Activated naive CD4-positive, alpha-beta T cell treated with anti-CD3 and anti-CD28 coated beads for 36 hours (primary cell): ENCODE measurements at regions of chr2 and their contacts with region 1.

Region 1: DNA sequence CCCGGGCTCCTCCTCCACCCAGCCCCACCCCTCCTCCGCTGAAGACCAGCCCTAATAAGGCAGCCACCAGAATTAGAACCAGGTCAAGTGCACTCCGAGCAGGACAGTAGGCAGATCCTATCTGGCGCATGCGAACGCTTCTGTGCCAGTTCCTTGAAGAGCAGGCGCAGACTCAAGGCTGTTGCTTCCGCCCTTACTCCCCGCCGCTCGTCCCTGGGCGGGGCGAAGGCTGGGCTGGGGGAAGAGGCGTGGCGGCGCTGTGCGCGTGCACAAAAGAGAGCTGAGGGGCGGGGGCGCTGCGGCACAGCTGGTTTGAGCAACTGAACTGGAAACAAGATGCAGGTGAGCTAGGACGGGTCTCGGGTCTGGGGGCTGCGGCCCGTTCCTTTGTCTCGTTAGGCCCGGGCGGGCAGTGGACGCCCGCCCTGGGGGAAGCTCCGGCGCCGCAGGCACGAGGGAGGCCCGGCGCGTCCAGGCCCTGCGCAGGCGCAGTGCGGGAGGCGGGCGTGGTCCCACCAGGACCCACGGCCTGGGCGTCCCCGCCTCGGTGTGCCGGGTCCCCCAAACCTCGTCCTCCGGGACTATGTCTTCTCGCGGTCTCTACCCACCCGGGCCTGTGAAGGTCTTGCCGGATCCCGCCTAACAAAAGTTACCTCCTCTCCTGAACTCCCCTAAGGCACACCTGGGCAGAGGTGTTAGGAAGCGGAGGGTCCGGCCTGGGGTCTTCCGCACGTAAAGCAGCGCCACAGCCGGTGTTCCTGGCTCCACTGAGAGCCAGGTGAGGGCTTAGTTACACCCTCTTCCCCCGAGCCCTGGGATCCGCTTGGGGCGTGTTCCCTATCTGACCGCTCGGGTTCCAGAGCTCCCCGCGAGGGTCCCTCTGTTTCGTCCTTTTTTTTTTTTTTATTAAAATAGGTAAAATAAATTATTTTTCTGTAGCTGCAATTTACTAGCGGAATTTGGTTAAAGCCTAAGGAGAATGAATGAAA is at the start of gene PDCL3:
- DNase-seq: peak; percentile 94
- H3K4me3 Mint-ChIP-seq: peak within 1 kb of the TSS; percentile 93
- H3K27ac Mint-ChIP-seq: peak within 1 kb of the TSS; percentile 98
- H3K4me1 Mint-ChIP-seq: peaks cover 43% of the 10 kb centered on the region
- H3K27me3 Mint-ChIP-seq: no peaks in the 10 kb centered on the region
- total RNA-seq, gene PDCL3: 42.2 to 42.8 TPM

Region 2: DNA sequence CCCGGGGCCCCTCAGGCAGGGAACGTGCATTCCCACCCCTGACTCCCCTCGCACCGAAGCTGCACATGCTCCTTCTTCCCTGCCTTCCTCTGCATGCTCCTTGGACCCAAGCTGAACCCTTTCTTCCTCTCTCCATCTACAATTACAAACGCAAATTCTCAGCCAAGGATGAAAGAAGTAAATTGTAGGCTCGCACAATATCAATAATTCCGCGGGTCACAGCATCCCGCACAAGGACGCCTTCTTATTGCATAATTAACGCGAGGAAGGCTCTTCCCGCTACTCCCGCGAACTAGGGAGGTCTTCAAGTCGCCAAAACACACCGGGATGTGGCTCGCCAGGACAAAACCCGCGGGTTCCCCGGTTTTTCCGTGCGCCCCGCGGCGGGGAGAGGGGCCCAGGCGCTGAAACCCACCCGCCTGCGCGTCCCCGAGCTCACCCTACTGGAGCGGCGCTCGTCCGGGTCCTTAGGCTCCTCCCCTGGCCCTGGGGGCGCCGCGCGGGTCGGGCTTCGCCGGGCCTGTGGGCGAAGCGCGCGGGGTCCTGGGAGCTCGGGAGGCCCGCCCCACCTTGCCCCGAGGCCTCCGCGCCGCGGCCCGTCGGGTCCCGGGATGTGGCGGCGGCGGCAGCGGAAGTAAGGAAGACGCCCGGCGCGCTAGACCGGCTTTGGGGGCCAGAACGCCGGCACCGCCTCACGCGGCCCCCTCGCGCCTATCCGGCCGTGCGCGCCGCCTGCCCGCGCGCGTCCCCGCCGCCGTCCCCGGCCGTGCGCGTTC is 145.9 kb before region 1 on chr2 and contains the start of gene CHST10:
- CTCF ChIA-PET with region 1: no interaction called
- intact Hi-C with region 1: loop called (anchors 2 kb)
- DNase-seq: peak; percentile 57
- H3K4me3 Mint-ChIP-seq: peak within 1 kb of the TSS; percentile 85
- H3K27ac Mint-ChIP-seq: peak within 1 kb of the TSS; percentile 1
- H3K4me1 Mint-ChIP-seq: peaks cover 21% of the 10 kb centered on the region
- H3K27me3 Mint-ChIP-seq: no peaks in the 10 kb centered on the region
- total RNA-seq, gene CHST10: 3.3 to 4.5 TPM

Region 3: DNA sequence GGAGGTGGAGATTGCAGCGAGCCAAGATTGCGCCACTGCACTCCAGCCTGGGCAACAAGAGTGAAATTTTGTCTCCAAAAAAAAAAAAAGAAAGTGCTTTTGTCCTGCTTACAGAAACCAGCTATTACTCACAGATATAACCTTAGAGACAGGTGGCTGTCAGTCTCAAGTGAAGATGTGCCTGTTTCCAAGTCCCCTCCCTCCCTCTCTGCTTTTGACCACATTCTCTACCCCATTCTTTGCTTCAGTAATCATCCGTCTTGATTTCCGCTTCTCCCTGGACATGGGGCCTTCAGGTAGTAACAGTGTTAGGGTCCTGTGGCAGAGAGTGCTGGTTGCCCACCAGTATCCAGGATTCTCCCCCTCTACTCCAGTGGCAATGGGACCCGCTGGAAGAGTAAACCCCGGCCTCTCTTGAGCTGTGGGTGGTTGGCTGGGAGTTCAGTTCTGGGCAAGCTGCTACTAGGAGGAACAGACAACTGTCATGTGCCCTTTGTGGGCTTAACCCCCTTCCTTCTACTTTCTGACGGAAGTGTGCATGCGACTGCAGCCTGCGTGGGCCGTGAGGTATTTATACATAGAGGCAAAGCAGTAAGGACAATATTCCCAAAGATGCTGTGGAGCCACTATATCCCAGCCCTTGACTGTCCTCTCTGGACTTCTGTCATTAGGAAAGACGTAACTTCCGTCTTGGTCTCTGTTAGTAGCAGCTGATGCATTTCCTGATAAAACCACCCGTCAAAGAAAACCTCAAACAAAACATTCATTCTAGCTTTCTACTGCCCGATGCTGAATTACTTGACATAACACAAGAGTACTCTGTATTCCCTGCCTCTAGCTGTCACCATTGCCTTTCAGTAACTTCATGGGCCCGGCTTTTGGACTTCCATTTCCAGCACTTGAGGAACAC is 17.6 kb after region 1 on chr2:
- CTCF ChIA-PET with region 1: interaction called, 3 read pairs
- intact Hi-C with region 1: loop called (anchors 1 kb)
- DNase-seq: peak; percentile 62
- H3K4me3 Mint-ChIP-seq: peak overlapping the region; percentile 56
- H3K27ac Mint-ChIP-seq: peak overlapping the region; percentile 93
- H3K4me1 Mint-ChIP-seq: peaks cover 40% of the 10 kb centered on the region
- H3K27me3 Mint-ChIP-seq: no peaks in the 10 kb centered on the region

Region 4: GRCh38 chr2:100653449-100654035 is 90.5 kb after region 1 on chr2:
- CTCF ChIA-PET with region 1: no interaction called
- intact Hi-C with region 1: loop called (anchors 5 kb)
- DNase-seq: peak; percentile 65
- H3K4me3 Mint-ChIP-seq: no peak overlapping the region
- H3K27ac Mint-ChIP-seq: no peak overlapping the region
- H3K4me1 Mint-ChIP-seq: peaks cover 53% of the 10 kb centered on the region
- H3K27me3 Mint-ChIP-seq: no peaks in the 10 kb centered on the region

Region 5: GRCh38 chr2:100786297-100786658 is 223.3 kb after region 1 on chr2:
- CTCF ChIA-PET with region 1: no interaction called
- intact Hi-C with region 1: no loop called
- DNase-seq: no peak
- H3K4me3 Mint-ChIP-seq: no peak overlapping the region
- H3K27ac Mint-ChIP-seq: no peak overlapping the region
- H3K4me1 Mint-ChIP-seq: no peaks in the 10 kb centered on the region
- H3K27me3 Mint-ChIP-seq: no peaks in the 10 kb centered on the region

Region 6: GRCh38 chr2:101001691-101002561 is 438.9 kb after region 1 on chr2 and contains the start of gene RPL31:
- CTCF ChIA-PET with region 1: no interaction called
- intact Hi-C with region 1: loop called (anchors 1 kb)
- DNase-seq: peak; percentile 99
- H3K4me3 Mint-ChIP-seq: peak within 1 kb of the TSS; percentile 99
- H3K27ac Mint-ChIP-seq: peak within 1 kb of the TSS; percentile 94
- H3K4me1 Mint-ChIP-seq: peaks cover 46% of the 10 kb centered on the region
- H3K27me3 Mint-ChIP-seq: no peaks in the 10 kb centered on the region
- total RNA-seq, gene RPL31: 2,225 to 2,255 TPM